ENCODE measurements at regions of chr22 and their contacts with region 1.

Region 1: GRCh38 chr22:28810821-28811491 is 10.6 kb upstream of the XBP1 start:
- DNase-seq: peak; percentile 75
- ATAC-seq: peak; percentile 52
- H3K4me3 Mint-ChIP-seq: peak overlapping the region; percentile 74
- H3K27ac Mint-ChIP-seq: peak overlapping the region; percentile 96
- H3K4me1 Mint-ChIP-seq: peaks cover 82% of the 10 kb centered on the region
- H3K27me3 Mint-ChIP-seq: no peaks in the 10 kb centered on the region

Region 2: DNA sequence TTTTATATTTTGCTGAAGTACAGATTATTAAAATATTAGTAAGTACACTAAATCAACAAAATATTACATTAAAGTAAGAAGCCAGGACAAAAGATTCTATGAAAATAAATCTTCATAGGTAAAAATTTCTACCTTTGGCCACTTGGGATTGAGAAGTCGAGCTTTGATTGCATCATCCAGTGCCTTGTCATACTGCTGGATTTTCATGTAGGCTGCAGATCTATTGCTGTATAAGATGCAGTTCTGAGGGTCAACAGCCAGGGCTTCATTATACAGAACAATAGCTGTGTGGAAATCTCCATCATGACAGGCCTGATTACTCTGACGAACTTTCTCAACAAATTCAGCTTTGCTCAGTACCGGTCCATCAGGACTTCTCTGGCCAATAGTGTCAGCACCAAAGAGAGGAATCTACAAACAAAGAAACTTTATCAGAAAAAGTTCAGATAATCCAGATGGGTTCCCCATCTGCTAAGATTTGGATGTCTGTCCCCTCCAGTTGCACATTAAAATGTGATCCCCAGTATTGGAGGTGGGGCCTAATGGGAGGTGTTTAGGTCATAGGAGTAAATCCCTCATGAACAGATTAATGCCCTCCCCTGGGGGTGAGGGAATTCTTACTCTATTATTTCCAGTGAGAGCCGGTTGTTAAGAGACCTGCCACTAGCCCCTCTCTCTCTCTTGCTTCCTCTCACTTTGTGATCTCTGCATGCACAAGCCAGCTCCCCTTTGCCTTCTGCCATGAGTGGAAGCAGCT is 181.4 kb before region 1 on chr22:
- CTCF ChIA-PET with region 1: no interaction called
- POLR2A ChIA-PET with region 1: no interaction called
- DNase-seq: no peak
- ATAC-seq: no peak
- H3K4me3 Mint-ChIP-seq: no peak overlapping the region
- H3K27ac Mint-ChIP-seq: no peak overlapping the region
- H3K4me1 Mint-ChIP-seq: no peaks in the 10 kb centered on the region
- H3K27me3 Mint-ChIP-seq: peaks cover 41% of the 10 kb centered on the region

Region 3: DNA sequence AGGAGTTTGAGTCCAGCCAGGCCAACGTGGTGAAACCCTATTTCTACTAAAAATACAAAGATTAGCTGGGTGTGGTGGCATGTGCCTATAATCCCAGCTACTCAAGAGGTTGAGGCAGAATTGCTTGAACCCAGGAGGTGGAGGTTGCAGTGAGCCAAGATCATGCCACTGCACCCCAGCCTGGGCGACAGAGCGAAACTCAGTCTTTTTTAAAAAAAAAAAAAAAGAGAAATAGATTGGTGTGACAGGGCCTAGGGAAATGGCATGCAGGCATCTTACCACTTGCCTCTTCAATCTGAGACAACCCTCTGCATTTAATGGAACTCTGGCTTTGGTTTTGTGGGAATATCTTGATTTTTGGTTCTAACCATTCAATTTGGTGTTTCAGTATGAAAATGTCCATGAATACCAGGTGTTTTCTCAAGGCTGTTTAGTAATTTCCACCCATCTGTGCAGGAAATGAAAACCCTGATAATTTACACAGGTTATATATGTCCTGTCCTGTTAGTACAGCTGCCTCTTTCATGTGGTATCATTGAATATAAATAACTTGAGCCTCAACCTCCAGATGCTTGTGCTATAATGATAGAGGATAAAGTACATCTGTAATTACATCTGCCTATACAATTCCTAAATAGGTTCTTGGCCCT is 19.0 kb before region 1 on chr22:
- CTCF ChIA-PET with region 1: interaction called, 11 read pairs
- POLR2A ChIA-PET with region 1: interaction called, 12 read pairs
- DNase-seq: no peak
- ATAC-seq: peak; percentile 54
- H3K4me3 Mint-ChIP-seq: peak overlapping the region; percentile 26
- H3K27ac Mint-ChIP-seq: peak overlapping the region; percentile 84
- H3K4me1 Mint-ChIP-seq: peaks cover 64% of the 10 kb centered on the region
- H3K27me3 Mint-ChIP-seq: no peaks in the 10 kb centered on the region

Region 4: GRCh38 chr22:28841111-28841510 is 30.2 kb after region 1 on chr22:
- CTCF ChIA-PET with region 1: no interaction called
- POLR2A ChIA-PET with region 1: no interaction called
- DNase-seq: no peak
- ATAC-seq: no peak
- H3K4me3 Mint-ChIP-seq: no peak overlapping the region
- H3K27ac Mint-ChIP-seq: no peak overlapping the region
- H3K4me1 Mint-ChIP-seq: no peaks in the 10 kb centered on the region
- H3K27me3 Mint-ChIP-seq: no peaks in the 10 kb centered on the region